Activated T-helper 2 cell treated with anti-CD3 and anti-CD28 coated beads, Interferon-gamma antibody, Interleukin-2, Interleukin-4, amounts not matched to agents 10 μg/mL and 5 μg/mL and 100 μg/mL, durations not matched to agents 14 hours and 24 hours and 36 hours (primary cell): ENCODE measurements at regions of chr1 and their contacts with region 1.

Region 1: DNA sequence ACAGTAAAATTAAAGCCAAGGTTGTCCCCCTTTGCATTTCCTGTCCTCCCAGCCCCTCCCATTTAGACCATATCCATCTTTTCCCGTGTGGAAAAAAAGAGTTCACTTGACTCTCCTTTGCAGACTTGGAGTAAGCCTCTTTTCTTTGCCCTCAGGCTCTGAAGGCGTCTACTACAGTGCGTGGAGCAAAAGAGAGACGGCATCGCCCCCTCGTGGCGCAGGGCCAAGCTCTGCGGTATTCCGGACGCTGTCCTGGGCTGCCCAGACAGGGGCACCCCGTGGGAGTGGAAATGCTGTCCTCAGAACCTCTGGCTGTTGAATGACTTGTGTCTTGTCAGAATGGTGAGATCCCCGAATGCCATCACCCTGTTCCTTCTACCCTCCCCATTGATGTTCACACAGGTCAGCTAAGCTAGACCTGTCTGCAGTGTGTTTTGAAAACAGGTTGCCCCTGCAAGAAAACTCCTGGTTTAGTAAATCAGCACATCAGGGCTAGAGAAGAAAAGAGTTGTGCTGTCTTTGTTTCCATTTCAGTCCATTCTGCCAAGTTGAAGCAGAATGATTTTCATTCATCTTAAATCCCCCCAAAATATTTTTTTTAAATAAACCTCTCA is 12.3 kb upstream of the GJA8 start:
- DNase-seq: peak; percentile 42
- H3K4me3 Mint-ChIP-seq: no peak overlapping the region
- H3K27ac Mint-ChIP-seq: no peak overlapping the region
- H3K4me1 Mint-ChIP-seq: peaks cover 6% of the 10 kb centered on the region
- H3K27me3 Mint-ChIP-seq: peaks cover 10% of the 10 kb centered on the region

Region 2: GRCh38 chr1:147273409-147274336 is 616.6 kb before region 1 on chr1:
- intact Hi-C with region 1: loop called (anchors 5 kb)
- DNase-seq: no peak
- H3K4me3 Mint-ChIP-seq: no peak overlapping the region
- H3K27ac Mint-ChIP-seq: no peak overlapping the region
- H3K4me1 Mint-ChIP-seq: peaks cover 7% of the 10 kb centered on the region
- H3K27me3 Mint-ChIP-seq: no peaks in the 10 kb centered on the region

Region 3: GRCh38 chr1:147494998-147495580 is 395.2 kb before region 1 on chr1:
- intact Hi-C with region 1: loop called (anchors 2 kb)
- DNase-seq: peak; percentile 57
- H3K4me3 Mint-ChIP-seq: no peak overlapping the region
- H3K27ac Mint-ChIP-seq: no peak overlapping the region
- H3K4me1 Mint-ChIP-seq: no peaks in the 10 kb centered on the region
- H3K27me3 Mint-ChIP-seq: peaks cover 11% of the 10 kb centered on the region

Region 4: DNA sequence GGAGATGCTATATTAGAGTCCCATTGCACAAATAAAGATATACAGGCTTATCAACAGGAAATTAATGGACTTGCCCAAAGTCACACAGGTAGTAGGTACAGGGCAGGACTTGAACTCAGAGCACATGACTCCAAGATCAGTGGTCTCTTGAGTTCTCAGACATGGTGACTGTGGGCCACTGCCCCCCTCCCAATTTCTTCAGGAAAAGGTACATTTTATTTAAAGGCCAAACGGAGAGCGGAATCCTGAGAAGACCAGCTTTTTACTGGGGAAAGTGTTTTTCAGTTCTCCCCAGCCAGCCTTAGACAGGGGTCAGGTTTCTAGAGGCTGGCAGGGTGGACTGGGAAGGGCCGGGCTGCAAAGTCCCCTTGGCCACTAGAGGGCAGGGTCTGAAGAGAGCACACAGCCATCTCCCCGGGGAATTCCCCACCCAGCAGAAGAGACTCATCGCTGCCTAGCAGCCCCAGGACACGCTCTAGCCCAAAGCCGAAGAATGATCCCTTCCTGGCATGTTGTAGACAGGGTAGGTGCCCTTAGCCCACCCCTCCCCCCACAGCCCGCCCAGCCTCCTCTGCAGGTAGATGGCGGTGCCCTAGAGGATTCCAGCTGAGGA is 249.6 kb before region 1 on chr1:
- intact Hi-C with region 1: loop called (anchors 2 kb)
- DNase-seq: peak; percentile 68
- H3K4me3 Mint-ChIP-seq: no peak overlapping the region
- H3K27ac Mint-ChIP-seq: peak overlapping the region; percentile 15
- H3K4me1 Mint-ChIP-seq: peaks cover 45% of the 10 kb centered on the region
- H3K27me3 Mint-ChIP-seq: no peaks in the 10 kb centered on the region

Region 5: GRCh38 chr1:147700042-147701006 is 190.0 kb before region 1 on chr1:
- intact Hi-C with region 1: loop called (anchors 1 kb)
- DNase-seq: peak; percentile 46
- H3K4me3 Mint-ChIP-seq: no peak overlapping the region
- H3K27ac Mint-ChIP-seq: no peak overlapping the region
- H3K4me1 Mint-ChIP-seq: peaks cover 5% of the 10 kb centered on the region
- H3K27me3 Mint-ChIP-seq: peaks cover 34% of the 10 kb centered on the region

Region 6: DNA sequence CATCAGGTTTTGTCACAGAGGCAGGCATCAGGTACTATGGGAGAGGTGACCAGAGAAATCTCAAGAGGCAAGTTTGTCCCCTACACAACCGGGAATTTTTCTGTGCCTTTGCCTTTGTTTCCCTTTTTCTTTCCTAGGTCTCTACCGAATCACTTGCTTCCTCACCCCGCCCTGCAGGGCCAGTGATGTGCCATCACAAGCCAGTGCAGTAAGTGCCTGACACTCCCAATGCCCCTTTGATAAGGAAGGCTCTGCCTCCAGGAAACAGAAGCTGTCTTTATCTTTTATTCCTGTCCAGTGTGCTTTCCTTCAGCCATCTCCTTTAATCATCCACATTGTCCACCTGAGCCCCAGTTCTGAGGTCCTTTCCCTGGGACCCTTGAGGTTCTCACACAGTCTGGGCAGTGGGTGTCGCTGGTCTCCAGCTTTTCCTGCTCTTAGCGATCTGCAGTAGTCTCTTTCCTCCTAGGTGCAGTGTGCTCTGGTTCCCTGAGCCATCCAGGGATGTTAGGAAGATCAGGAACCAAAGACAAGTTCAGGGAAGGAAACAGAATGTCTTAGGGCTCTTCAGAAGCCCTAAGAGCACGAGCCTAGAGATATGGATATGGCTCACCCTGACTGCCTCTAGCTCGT is 166.5 kb before region 1 on chr1:
- intact Hi-C with region 1: loop called (anchors 5 kb)
- DNase-seq: no peak
- H3K4me3 Mint-ChIP-seq: no peak overlapping the region
- H3K27ac Mint-ChIP-seq: no peak overlapping the region
- H3K4me1 Mint-ChIP-seq: no peaks in the 10 kb centered on the region
- H3K27me3 Mint-ChIP-seq: peaks cover 35% of the 10 kb centered on the region

Region 7: DNA sequence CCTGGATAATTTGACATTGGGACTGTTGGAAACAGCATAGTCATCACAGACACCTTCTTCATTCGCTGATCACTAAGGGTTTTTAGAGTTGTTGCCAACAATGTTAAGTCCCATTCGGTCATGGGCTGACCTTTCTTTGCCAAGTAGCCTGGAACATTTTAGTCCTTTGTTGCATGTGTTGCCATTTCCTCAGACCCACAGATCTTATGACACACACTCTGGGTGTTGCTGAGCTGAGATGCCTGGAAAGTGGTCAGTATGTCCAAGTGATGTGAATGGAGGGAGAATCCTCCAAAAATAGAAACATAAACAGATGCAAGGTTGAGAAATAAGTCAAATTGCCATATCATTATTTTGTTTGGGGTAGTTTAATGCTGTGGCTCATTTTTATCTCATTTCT is 68.4 kb before region 1 on chr1:
- intact Hi-C with region 1: no loop called
- DNase-seq: no peak
- H3K4me3 Mint-ChIP-seq: no peak overlapping the region
- H3K27ac Mint-ChIP-seq: no peak overlapping the region
- H3K4me1 Mint-ChIP-seq: no peaks in the 10 kb centered on the region
- H3K27me3 Mint-ChIP-seq: peaks cover 11% of the 10 kb centered on the region

Region 8: GRCh38 chr1:147902183-147902845 is 12.0 kb after region 1 on chr1 and contains the start of gene GJA8:
- intact Hi-C with region 1: no loop called
- DNase-seq: no peak
- H3K4me3 Mint-ChIP-seq: no peak within 1 kb of the TSS
- H3K27ac Mint-ChIP-seq: no peak within 1 kb of the TSS
- H3K4me1 Mint-ChIP-seq: peaks cover 12% of the 10 kb centered on the region
- H3K27me3 Mint-ChIP-seq: peaks cover 15% of the 10 kb centered on the region
- total RNA-seq, gene GJA8: not detected in 2 replicates